Heart right ventricle (tissue), 16 donors: ENCODE measurements at regions of chr14 and their contacts with region 1.

Region 1: DNA sequence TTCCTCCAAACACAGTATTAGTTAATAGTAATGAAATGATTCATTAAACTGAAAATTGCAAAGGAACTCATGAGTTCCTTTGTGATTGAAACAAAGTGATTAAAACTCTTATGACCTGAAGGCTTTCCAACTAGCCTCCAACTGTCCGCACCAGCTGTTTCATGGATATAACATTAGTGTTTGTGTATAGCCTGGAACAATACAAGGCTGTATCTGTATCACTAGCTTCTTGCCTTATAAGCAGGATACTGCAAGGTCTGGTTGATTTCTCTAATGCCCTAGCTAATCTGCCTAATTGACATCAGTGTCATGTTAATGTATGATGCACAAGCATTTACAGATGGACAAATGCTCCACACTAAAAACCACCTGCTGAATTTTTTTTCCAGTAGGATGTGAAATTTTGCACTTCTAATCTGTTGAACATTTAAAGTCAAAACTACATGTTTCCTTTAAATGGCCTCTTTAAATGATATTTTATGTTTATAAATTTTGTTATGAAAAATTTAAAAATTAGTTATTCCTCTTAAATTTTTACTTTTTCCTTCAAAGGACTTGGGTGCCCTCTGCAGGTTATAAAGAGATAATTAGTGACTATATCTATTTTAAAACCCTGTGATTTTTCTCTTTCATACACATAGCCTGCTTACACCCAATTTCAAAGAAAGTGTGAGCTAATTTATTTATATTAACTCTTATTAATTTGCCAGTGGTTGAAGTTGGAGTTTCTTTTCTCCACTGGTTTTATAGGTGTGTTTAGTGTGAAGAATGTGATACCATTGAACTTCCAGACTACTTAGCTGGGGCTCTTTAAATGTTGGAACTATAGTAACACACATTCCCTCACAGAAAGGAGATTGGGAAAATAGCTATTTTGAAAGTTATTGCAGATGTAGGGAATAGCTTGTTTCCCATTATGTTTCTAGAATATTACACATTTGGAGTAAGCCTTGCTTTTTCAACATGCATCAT is 25.4 kb downstream of the AP5M1 start:
- DNase-seq: no peak
- ATAC-seq: no peak
- H3K4me3 ChIP-seq: no peak overlapping the region
- H3K27ac ChIP-seq: no peak overlapping the region
- H3K4me1 ChIP-seq: peaks cover 0 to 6% (median 0%) of the 10 kb centered on the region in 9 donors
- H3K27me3 ChIP-seq: no peaks in the 10 kb centered on the region
- CTCF ChIP-seq: peak in 7 of 9 donors; percentile 8 to 53 (median 41)

Region 2: GRCh38 chr14:56797569-56798446 is 496.3 kb before region 1 on chr14:
- intact Hi-C with region 1: no loop called
- DNase-seq: no peak
- ATAC-seq: peak in 3 of 8 donors; percentile 23 to 44 (median 29)
- H3K4me3 ChIP-seq: peak overlapping the region in 7 of 10 donors; percentile 8 to 42 (median 22)
- H3K27ac ChIP-seq: no peak overlapping the region
- H3K4me1 ChIP-seq: peaks cover 0 to 27% (median 12%) of the 10 kb centered on the region in 9 donors
- H3K27me3 ChIP-seq: peaks cover 31 to 100% (median 100%) of the 10 kb centered on the region in 7 donors
- CTCF ChIP-seq: no peak

Region 3: DNA sequence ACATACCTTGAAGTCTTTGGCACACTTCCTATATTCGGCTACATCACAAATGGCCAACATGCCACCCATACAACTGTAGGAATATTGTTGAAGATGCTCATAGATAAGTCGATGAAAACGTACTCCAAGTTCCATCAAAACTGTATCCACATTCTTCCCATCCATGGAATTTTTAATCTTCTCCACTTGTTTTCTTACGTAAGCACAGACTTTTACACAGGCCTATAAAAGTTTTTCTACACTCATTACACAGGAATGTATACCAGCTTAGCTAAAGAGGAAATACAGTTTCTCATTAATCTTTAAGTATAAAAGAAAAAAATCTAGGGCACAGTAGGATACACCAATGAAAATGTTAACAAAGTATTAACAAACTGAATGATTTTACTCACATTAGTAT is 84.6 kb before region 1 on chr14:
- intact Hi-C with region 1: loop called in 2 of 10 experiments (anchors 10 kb)
- DNase-seq: no peak
- ATAC-seq: no peak
- H3K4me3 ChIP-seq: no peak overlapping the region
- H3K27ac ChIP-seq: no peak overlapping the region
- H3K4me1 ChIP-seq: no peaks in the 10 kb centered on the region
- H3K27me3 ChIP-seq: no peaks in the 10 kb centered on the region
- CTCF ChIP-seq: no peak

Region 4: DNA sequence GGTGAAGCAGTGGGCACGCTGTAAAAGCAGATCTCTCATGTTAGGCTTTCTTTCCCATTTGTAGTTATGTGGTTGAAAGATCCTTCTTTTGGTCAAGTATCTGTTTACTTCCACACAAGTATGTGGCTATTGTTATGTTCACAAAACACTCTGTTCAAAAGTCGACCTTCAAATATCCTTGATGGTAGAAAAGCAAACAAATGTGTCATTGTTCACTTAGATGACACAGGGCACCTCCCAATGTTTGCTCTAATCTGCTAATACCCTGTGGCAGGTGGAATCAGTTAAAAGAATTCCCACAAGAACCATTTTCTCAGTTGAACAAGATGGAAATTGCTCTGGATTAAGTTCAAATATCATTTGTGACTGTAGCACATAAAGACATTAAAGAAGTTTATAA is 52.6 kb after region 1 on chr14:
- intact Hi-C with region 1: no loop called
- DNase-seq: no peak
- ATAC-seq: no peak
- H3K4me3 ChIP-seq: no peak overlapping the region
- H3K27ac ChIP-seq: no peak overlapping the region
- H3K4me1 ChIP-seq: no peaks in the 10 kb centered on the region
- H3K27me3 ChIP-seq: peaks cover 0 to 4% (median 0%) of the 10 kb centered on the region in 7 donors
- CTCF ChIP-seq: no peak